ENCODE measurements at regions of chr10 and their contacts with region 1.

Region 1: GRCh38 chr10:69506834-69507721 is 55.8 kb downstream of the TSPAN15 start:
- DNase-seq: peak; percentile 73
- H3K4me3 ChIP-seq: peak overlapping the region in 1 of 4 donors; percentile 24
- H3K27ac ChIP-seq: peak overlapping the region; percentile 69 to 93 (median 78)
- H3K4me1 ChIP-seq: peaks cover 0 to 28% (median 23%) of the 10 kb centered on the region in 4 donors
- H3K27me3 ChIP-seq: no peaks in the 10 kb centered on the region
- CTCF ChIP-seq: no peak
- EP300 ChIP-seq: no peak
- POLR2A ChIP-seq: no peak

Region 2: GRCh38 chr10:69327463-69328379 is 179.4 kb before region 1 on chr10:
- intact Hi-C with region 1: loop called (anchors 10 kb)
- DNase-seq: peak; percentile 93
- H3K4me3 ChIP-seq: peak overlapping the region in 3 of 4 donors; percentile 26 to 43 (median 39)
- H3K27ac ChIP-seq: peak overlapping the region; percentile 80 to 91 (median 82)
- H3K4me1 ChIP-seq: peaks cover 0 to 82% (median 73%) of the 10 kb centered on the region in 4 donors
- H3K27me3 ChIP-seq: no peaks in the 10 kb centered on the region
- CTCF ChIP-seq: no peak
- EP300 ChIP-seq: no peak
- POLR2A ChIP-seq: peak; percentile 63 to 66

Region 3: GRCh38 chr10:69425511-69426298 is 81.4 kb before region 1 on chr10:
- intact Hi-C with region 1: loop called (anchors 1 kb)
- DNase-seq: peak; percentile 25
- H3K4me3 ChIP-seq: no peak overlapping the region
- H3K27ac ChIP-seq: peak overlapping the region; percentile 88 to 97 (median 94)
- H3K4me1 ChIP-seq: peaks cover 0 to 44% (median 29%) of the 10 kb centered on the region in 4 donors
- H3K27me3 ChIP-seq: no peaks in the 10 kb centered on the region
- CTCF ChIP-seq: no peak
- EP300 ChIP-seq: no peak
- POLR2A ChIP-seq: no peak

Region 4: DNA sequence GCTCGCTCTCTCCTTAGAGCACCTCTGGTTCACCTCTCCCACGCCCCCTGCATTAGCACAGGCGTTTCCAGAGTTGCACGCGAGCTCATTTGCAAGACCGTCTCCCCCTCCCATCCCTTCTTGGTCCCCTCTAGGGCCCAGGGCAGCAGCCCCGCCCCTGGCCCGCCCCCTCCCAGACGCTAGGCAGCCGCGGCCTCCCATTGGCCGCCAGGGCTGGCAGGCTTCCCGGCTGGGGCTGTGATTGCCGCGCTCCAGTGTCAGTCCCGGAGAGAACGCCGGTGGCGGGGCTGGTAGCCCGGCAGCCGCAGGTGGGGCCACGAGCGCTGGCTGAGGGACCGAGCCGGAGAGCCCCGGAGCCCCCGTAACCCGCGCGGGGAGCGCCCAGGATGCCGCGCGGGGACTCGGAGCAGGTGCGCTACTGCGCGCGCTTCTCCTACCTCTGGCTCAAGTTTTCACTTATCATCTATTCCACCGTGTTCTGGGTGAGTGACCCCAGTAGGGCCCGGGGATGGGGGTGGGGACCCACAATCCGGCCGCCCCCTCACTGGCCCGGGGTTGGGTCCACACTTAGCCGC is 55.8 kb before region 1 on chr10 and contains the start of gene TSPAN15:
- intact Hi-C with region 1: loop called (anchors 5 kb)
- DNase-seq: peak; percentile 95
- H3K4me3 ChIP-seq: peak within 1 kb of the TSS; percentile 64 to 86 (median 83)
- H3K27ac ChIP-seq: peak within 1 kb of the TSS; percentile 85 to 93 (median 92)
- H3K4me1 ChIP-seq: peaks cover 0 to 72% (median 68%) of the 10 kb centered on the region in 4 donors
- H3K27me3 ChIP-seq: no peaks in the 10 kb centered on the region
- CTCF ChIP-seq: peak in 1 of 4 experiments; percentile 8
- EP300 ChIP-seq: no peak
- POLR2A ChIP-seq: peak; percentile 79 to 88
- total RNA-seq, gene TSPAN15: 55.4 to 76.4 (median 67.4) TPM